ENCODE measurements at regions of chr2 and their contacts with region 1.

Region 1: DNA sequence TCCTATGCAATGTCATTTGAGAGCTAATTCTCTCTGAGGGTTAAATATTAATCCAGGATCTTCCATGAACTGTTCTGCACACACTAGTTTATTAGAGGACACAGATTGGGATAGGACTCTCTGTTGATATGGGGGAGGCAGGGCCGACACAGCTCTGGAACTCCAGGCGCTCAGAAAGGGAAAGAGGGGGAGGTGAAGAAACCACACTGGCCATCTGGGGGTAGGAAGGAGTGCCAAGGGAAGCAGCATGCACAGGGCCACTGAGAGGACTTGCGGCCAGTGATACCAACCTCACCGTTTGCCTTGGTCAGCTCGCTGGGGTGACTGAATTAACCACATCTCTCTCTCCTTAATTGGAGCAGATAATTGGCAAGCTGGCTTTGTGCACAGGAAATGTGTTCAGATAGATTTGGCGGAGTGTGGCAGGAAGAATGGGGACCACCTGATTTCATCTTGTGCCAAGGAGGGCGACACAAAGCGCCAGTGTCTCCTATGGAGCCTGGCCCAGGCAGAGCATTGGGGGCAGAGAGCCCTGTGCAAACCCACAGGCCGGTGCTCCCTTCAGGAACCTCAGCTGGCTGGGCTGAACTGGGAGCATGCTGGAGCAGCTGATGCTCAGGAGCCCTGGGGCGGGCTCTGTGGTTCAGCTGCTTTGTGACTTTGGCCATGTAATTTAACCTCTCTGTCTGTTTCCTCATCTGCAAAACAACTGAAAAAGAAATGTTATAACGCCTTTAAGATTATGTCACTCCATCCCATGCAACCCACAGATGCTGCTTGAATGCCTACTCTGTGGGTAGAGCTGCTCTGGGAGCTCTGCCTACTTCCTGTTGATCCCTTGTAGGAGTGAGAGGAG is 114.7 kb upstream of the STON1 start:
- DNase-seq: no peak
- H3K4me3 ChIP-seq: no peak overlapping the region
- H3K27ac ChIP-seq: no peak overlapping the region
- H3K4me1 ChIP-seq: peaks cover 7% of the 10 kb centered on the region
- H3K27me3 ChIP-seq: no peaks in the 10 kb centered on the region
- CTCF ChIP-seq: no peak
- EP300 ChIP-seq: no peak
- POLR2A ChIP-seq: no peak

Region 2: DNA sequence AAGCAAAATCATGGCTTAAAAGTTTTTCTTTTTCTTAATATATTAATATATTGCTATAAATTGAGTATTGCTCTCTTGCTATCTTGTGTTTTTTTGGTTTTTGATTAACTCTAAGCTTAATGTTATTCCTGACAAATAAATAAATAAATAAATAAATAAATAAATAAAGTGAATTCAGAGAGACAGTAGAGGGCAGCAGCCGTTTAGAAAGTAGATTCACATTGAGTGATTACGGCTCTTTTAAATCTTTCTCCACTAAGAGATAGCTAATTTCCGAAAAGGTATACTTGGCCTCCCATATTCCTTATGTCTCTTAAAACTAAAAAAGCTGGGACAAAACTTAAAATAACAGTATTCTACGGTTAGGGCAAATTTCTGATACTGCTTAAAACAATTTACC is 977.9 kb before region 1 on chr2:
- intact Hi-C with region 1: loop called in 1 of 4 experiments (anchors 10 kb)
- DNase-seq: no peak
- H3K4me3 ChIP-seq: no peak overlapping the region
- H3K27ac ChIP-seq: no peak overlapping the region
- H3K4me1 ChIP-seq: peaks cover 1% of the 10 kb centered on the region
- H3K27me3 ChIP-seq: no peaks in the 10 kb centered on the region
- CTCF ChIP-seq: peak in 1 of 3 donors; percentile 45
- EP300 ChIP-seq: no peak
- POLR2A ChIP-seq: no peak

Region 3: GRCh38 chr2:48328159-48328809 is 86.9 kb before region 1 on chr2:
- intact Hi-C with region 1: loop called in 1 of 4 experiments (anchors 5 kb)
- DNase-seq: no peak
- H3K4me3 ChIP-seq: no peak overlapping the region
- H3K27ac ChIP-seq: no peak overlapping the region
- H3K4me1 ChIP-seq: no peaks in the 10 kb centered on the region
- H3K27me3 ChIP-seq: no peaks in the 10 kb centered on the region
- CTCF ChIP-seq: no peak
- EP300 ChIP-seq: no peak
- POLR2A ChIP-seq: no peak

Region 4: DNA sequence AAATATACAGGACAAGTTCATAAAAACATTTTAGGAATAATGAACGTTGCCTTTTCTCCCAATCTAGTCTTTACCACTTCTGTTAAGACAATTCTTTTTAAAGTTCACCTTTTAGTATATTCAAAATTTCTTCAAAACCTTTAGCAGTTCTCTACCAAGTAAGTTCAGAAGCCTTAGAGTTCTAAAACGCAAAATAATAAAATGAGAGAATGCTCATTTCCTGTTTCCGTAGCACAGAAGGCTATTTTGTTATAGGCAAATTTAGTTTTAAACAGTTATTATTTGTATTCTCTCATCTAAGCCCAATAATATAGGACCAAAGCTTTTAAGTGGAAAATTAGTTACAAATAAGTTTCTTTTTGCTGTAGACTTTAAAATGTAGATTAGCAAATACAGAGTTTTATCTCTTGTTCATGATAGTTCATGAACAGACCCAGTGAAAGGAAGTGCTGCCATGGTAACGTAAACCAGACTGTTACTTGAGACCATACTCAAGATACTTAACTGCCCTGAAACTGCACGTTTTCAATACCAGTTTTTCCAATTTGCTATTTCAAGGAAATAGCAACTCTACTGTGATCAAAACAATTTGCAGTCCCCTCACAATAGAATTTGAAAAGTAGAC is 58.4 kb before region 1 on chr2:
- intact Hi-C with region 1: loop called in 1 of 4 experiments (anchors 10 kb)
- DNase-seq: no peak
- H3K4me3 ChIP-seq: no peak overlapping the region
- H3K27ac ChIP-seq: no peak overlapping the region
- H3K4me1 ChIP-seq: peaks cover 2% of the 10 kb centered on the region
- H3K27me3 ChIP-seq: no peaks in the 10 kb centered on the region
- CTCF ChIP-seq: no peak
- EP300 ChIP-seq: no peak
- POLR2A ChIP-seq: no peak

Measured in ovary (tissue), 10 donors.